ENCODE measurements at regions of chrX and their contacts with region 1.

Region 1: GRCh38 chrX:108224727-108225621 is 133.4 kb downstream of the ATG4A start:
- DNase-seq: peak; percentile 71
- H3K4me3 ChIP-seq: no peak overlapping the region
- H3K27ac ChIP-seq: no peak overlapping the region
- H3K4me1 ChIP-seq: peaks cover 3% of the 10 kb centered on the region
- H3K27me3 ChIP-seq: no peaks in the 10 kb centered on the region
- CTCF ChIP-seq: peak; percentile 72

Region 2: GRCh38 chrX:107818900-107819521 is 406.0 kb before region 1 on chrX:
- CTCF ChIA-PET with region 1: no interaction called
- POLR2A ChIA-PET with region 1: no interaction called
- intact Hi-C with region 1: no loop called
- DNase-seq: no peak
- H3K4me3 ChIP-seq: no peak overlapping the region
- H3K27ac ChIP-seq: no peak overlapping the region
- H3K4me1 ChIP-seq: no peaks in the 10 kb centered on the region
- H3K27me3 ChIP-seq: peaks cover 4% of the 10 kb centered on the region
- CTCF ChIP-seq: no peak

Region 3: GRCh38 chrX:108304210-108304609 is 79.2 kb after region 1 on chrX:
- CTCF ChIA-PET with region 1: interaction called, 3 read pairs
- POLR2A ChIA-PET with region 1: no interaction called
- intact Hi-C with region 1: loop called (anchors 2 kb)
- DNase-seq: peak; percentile 24
- H3K4me3 ChIP-seq: no peak overlapping the region
- H3K27ac ChIP-seq: no peak overlapping the region
- H3K4me1 ChIP-seq: no peaks in the 10 kb centered on the region
- H3K27me3 ChIP-seq: peaks cover 16% of the 10 kb centered on the region
- CTCF ChIP-seq: peak; percentile 61

Region 4: GRCh38 chrX:108537005-108537404 is 312.0 kb after region 1 on chrX:
- CTCF ChIA-PET with region 1: no interaction called
- POLR2A ChIA-PET with region 1: no interaction called
- intact Hi-C with region 1: loop called (anchors 2 kb)
- DNase-seq: peak; percentile 21
- H3K4me3 ChIP-seq: no peak overlapping the region
- H3K27ac ChIP-seq: no peak overlapping the region
- H3K4me1 ChIP-seq: no peaks in the 10 kb centered on the region
- H3K27me3 ChIP-seq: no peaks in the 10 kb centered on the region
- CTCF ChIP-seq: peak; percentile 75